ENCODE measurements at regions of chr9 and their contacts with region 1.

Region 1: GRCh38 chr9:19992556-19992955 is 203.7 kb upstream of the SLC24A2 start:
- DNase-seq: no peak
- ATAC-seq: no peak
- H3K4me3 ChIP-seq: no peak overlapping the region
- H3K4me3 Mint-ChIP-seq: no peak overlapping the region
- H3K27ac ChIP-seq: no peak overlapping the region
- H3K27ac Mint-ChIP-seq: no peak overlapping the region
- H3K4me1 ChIP-seq: no peaks in the 10 kb centered on the region
- H3K4me1 Mint-ChIP-seq: peaks cover 0 to 37% (median 0%) of the 10 kb centered on the region in 7 donors
- H3K27me3 ChIP-seq: no peaks in the 10 kb centered on the region
- H3K27me3 Mint-ChIP-seq: no peaks in the 10 kb centered on the region

Region 2: GRCh38 chr9:20028849-20029231 is 36.3 kb after region 1 on chr9:
- CTCF ChIA-PET with region 1: no interaction called
- POLR2A ChIA-PET with region 1: no interaction called
- intact Hi-C with region 1: loop called in 1 of 2 experiments (anchors 5 kb)
- DNase-seq: no peak
- ATAC-seq: no peak
- H3K4me3 ChIP-seq: no peak overlapping the region
- H3K4me3 Mint-ChIP-seq: no peak overlapping the region
- H3K27ac ChIP-seq: no peak overlapping the region
- H3K27ac Mint-ChIP-seq: peak overlapping the region in 1 of 9 donors; percentile 14
- H3K4me1 ChIP-seq: no peaks in the 10 kb centered on the region
- H3K4me1 Mint-ChIP-seq: peaks cover 0 to 4% (median 0%) of the 10 kb centered on the region in 7 donors
- H3K27me3 ChIP-seq: no peaks in the 10 kb centered on the region
- H3K27me3 Mint-ChIP-seq: peaks cover 0 to 4% (median 0%) of the 10 kb centered on the region in 5 donors